Mammary epithelial cell (primary cell): ENCODE measurements at regions of chr1 and their contacts with region 1.

Region 1: DNA sequence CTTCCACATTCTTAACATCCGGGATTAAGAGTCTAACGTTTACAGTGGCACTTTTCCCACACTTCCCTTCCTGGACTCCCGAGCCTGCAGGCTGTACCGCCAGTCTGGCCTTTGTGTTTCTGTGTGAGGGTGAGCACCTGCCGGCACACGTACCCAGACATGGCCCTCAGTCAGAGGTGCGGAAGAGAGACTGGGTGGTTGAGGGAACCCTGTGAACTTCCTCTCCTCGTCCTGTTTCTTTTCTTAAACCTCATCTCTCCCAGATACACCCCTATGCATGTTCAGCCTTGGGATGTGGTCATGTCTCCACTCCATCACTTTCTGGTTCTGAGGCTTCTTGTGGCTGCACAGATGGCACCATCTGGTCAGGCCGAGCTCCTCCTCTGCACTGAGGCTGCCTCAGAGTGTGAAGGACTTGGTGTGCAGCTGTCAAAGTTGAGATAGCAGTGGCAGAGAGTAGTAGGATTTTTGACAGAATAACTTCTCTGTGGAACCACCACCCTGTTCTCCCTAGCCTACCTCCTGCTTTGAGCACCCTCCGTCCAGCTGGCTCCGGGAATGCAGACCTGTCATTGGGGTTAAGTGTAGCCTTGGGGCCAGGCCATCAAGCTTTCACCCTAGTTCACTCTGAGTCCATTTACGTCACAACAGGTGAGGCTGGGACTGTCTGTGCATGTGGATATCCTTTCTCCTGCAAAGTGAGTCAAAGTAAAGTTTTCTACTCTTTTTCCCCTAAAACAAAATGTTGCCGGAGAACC is 31.4 kb downstream of the VASH2 start:
- DNase-seq: no peak
- H3K4me3 ChIP-seq: no peak overlapping the region
- H3K27ac ChIP-seq: no peak overlapping the region
- H3K4me1 ChIP-seq: no peaks in the 10 kb centered on the region
- H3K27me3 ChIP-seq: no peaks in the 10 kb centered on the region
- CTCF ChIP-seq: no peak

Region 2: DNA sequence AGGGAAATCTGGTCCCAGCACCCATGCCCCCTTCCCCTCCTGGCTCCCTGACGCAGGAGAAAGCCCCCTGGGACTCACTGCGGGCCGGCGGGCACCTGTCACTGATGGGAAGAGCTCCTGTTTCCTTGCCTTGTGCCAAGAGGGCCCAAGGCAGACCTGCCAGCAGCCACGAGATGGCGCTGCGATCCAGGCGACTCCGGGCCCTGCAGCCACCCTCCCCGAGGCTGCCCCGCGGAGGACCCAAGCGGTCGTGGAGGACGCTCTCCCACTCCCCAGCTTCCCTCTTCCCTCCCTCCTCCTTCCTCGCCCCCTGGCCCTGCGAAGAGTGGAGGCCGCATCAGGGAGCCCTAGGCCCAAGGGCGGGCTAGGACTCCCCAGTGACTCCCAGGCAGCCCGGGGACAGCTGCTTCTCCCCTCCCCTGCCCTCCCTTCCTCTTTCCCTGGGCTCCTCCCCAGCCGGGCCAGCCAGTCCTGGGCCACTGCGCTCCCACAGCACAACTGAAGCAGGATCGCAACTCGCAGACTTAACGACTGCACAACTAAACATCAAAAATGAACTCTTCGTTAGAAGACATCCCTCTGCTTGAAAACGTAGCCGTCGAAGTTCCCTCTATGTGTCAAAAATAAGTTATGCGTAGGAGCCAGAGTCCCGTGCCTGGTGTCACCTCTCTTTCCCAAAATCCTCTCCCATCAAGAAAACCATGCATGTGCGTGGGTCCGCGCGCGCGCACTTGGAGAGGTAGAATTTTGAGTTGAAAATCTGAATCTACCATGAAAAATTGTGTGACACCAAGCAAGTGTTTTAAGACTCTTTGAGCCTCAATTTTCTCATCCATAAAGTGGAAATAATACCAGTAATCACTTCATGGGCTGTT is 316.3 kb before region 1 on chr1:
- CTCF ChIA-PET with region 1: no interaction called
- dilution Hi-C with region 1: no loop called
- in situ Hi-C with region 1: loop called in 1 of 2 experiments (anchors 25 kb)
- intact Hi-C with region 1: no loop called
- DNase-seq: peak; percentile 56
- H3K4me3 ChIP-seq: no peak overlapping the region
- H3K27ac ChIP-seq: no peak overlapping the region
- H3K4me1 ChIP-seq: peaks cover 13% of the 10 kb centered on the region
- H3K27me3 ChIP-seq: no peaks in the 10 kb centered on the region
- CTCF ChIP-seq: peak; percentile 68 to 88

Region 3: DNA sequence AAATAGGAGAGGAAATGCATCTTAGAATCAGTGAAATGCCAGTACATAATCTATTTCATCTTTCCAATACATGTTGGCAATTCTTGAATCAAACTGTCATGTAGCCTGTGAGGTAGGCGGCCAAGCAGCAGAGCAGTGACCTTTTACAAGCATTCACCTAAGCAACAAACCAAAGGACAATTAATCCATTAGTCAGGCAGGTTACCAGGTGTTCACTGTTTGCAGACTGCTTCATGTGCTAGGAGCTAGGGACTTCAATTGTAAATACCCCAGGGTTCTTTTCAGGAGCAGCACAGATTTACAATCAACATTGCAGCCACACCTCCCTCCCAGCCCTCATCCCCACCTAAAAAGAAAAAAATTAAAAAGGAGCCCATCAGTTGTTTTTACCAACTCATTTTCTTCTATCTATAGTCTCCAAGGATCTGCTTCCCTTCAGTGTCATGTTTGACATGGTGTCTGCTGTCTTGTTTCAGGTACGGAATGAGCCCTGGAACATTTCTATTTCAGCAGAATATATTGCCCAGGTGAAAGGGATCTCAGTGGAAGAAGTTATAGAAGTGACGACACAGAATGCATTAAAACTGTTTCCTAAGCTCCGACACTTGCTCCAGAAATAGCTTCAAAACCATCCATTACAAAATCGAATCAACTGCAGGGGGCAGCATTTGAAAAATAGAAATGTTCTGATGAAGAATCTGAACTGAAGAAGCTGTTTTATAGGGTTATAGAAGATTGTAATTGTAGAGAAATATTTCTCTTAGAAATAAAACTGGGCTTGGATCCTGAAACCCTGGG is 167.0 kb before region 1 on chr1:
- CTCF ChIA-PET with region 1: no interaction called
- dilution Hi-C with region 1: no loop called
- in situ Hi-C with region 1: loop called (anchors 25 kb)
- intact Hi-C with region 1: no loop called
- DNase-seq: no peak
- H3K4me3 ChIP-seq: no peak overlapping the region
- H3K27ac ChIP-seq: no peak overlapping the region
- H3K4me1 ChIP-seq: no peaks in the 10 kb centered on the region
- H3K27me3 ChIP-seq: no peaks in the 10 kb centered on the region
- CTCF ChIP-seq: peak; percentile 21 to 36

Region 4: DNA sequence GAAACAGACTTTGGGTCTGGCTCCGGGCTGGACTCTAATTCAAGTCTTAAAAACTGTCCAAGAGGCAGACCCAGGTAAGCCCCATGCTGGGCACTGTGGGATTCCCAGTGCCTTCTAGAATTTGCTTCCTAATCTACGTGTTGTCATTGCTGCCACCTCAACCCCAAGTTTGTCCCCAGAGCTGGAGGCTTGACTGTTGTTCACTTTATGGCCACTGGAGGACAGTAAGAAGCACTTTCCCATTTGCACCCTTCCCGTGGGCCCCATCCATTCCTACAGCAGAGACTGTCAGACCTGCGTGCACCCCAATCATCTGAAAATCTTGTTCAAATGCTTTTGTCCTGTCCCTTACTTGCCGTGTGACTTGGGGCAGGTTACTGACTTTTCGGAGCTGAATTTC is 60.9 kb before region 1 on chr1:
- CTCF ChIA-PET with region 1: no interaction called
- dilution Hi-C with region 1: loop called (anchors 5 kb)
- in situ Hi-C with region 1: no loop called
- intact Hi-C with region 1: no loop called
- DNase-seq: no peak
- H3K4me3 ChIP-seq: no peak overlapping the region
- H3K27ac ChIP-seq: no peak overlapping the region
- H3K4me1 ChIP-seq: no peaks in the 10 kb centered on the region
- H3K27me3 ChIP-seq: peaks cover 2% of the 10 kb centered on the region
- CTCF ChIP-seq: peak; percentile 12 to 22

Region 5: DNA sequence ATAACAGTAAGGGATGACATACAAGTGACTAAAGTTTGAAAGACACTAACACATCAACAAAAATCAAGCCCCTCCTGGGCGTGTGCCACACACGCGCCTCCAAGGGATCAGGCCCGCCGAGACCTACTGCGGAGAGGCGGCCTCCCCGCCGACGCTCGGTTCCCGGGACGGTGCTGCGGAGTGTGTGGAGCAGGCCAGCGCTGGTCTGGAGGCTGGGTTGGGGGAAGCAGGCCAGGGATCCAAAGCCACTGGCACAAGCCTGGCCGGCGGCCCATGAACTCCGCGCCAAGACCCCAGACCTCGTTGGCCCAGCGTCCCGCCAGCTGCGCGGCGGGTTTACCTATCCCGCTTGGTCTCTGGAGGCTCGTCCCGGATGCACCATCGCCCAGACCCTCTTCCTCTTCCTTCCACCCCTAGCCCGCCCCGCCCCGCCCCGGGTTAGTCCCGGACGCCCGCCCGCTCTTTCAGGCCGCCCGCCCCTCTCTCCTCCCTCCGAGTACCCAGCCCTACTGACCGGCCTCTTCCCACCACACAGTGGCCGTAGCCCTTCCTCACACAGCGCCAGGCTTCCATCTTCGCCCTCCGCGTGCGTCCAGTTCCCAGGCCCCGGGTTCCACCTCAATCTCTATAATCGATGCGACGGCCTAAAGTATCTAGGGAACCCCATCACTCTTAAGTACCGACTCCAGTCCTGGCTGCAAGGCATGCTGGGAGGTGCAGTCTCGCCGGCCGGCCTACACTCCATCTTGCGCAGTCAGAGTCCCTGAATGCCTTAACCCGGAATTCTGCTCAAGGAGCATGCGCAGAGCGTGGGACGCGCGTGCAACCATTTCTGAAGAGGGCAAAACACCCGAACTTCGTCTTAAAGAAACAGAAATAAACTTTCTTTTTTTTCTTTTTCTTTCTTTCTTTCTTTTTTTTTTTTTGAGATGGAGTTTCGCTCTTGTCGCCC is 33.6 kb after region 1 on chr1 and contains the start of gene ANGEL2:
- CTCF ChIA-PET with region 1: no interaction called
- dilution Hi-C with region 1: loop called (anchors 5 kb)
- in situ Hi-C with region 1: no loop called
- intact Hi-C with region 1: no loop called
- DNase-seq: peak; percentile 95
- H3K4me3 ChIP-seq: peak within 1 kb of the TSS; percentile 72 to 97 (median 96)
- H3K27ac ChIP-seq: peak within 1 kb of the TSS; percentile 76
- H3K4me1 ChIP-seq: peaks cover 10% of the 10 kb centered on the region
- H3K27me3 ChIP-seq: no peaks in the 10 kb centered on the region
- CTCF ChIP-seq: no peak
- total RNA-seq, gene ANGEL2: 28.5 to 38.3 TPM